ENCODE measurements at regions of chr14 and their contacts with region 1.

Region 1: GRCh38 chr14:35046048-35046741 is at the start of gene FAM177A1:
- DNase-seq: peak; percentile 97 to 99 (median 99)
- ATAC-seq: peak; percentile 96 to 98 (median 98)
- H3K4me3 ChIP-seq: peak within 1 kb of the TSS; percentile 62 to 95 (median 84)
- H3K27ac ChIP-seq: peak within 1 kb of the TSS; percentile 91 to 99 (median 96)
- H3K4me1 ChIP-seq: peaks cover 0 to 43% (median 27%) of the 10 kb centered on the region in 12 donors
- H3K27me3 ChIP-seq: no peaks in the 10 kb centered on the region
- CTCF ChIP-seq: no peak
- POLR2A ChIP-seq: peak; percentile 74 to 96
- total RNA-seq, gene FAM177A1: 56.3 to 129 (median 98.8) TPM

Region 2: DNA sequence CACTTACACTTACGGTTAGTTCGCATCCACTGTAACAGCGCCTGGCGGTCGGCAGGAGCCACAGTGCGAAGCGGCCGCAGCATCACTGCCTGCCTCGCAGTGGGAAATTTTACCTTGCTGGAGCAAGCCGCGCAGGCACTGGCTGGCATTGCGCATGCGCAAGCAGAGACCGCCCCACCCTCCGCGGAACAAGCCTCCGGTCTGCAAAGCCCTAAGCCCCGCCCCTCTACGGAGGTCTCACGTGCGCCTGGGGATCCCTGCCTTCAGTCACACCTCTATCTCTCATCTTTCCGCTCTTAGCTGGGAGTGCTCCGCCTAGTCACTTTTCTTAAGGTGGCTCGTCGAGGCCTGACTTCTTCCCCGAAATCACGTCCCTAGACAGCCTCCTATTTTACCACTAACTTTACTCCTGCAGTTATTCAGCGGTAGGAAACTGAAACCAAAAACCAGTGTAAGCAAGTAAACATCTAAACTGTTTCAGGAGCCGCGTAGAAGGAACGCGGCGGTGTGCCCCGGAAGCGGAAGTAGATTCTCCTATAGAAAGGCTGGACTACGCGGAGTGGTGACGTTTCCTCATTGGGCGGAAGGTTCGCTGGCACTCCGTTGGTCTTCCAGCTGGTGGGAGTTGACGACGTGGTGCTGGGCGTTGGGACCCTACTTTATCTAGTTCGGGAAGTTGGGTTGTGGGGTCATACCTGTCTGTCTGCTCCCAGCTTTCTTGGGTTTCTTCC is 63.6 kb before region 1 on chr14 and contains the start of gene SRP54:
- intact Hi-C with region 1: loop called in 4 of 10 experiments (anchors 5 to 10 kb)
- DNase-seq: peak; percentile 98 to 99 (median 99)
- ATAC-seq: peak; percentile 97 to 99 (median 97)
- H3K4me3 ChIP-seq: peak within 1 kb of the TSS; percentile 66 to 99 (median 86)
- H3K27ac ChIP-seq: peak within 1 kb of the TSS; percentile 90 to 100 (median 96)
- H3K4me1 ChIP-seq: peaks cover 7 to 44% (median 29%) of the 10 kb centered on the region in 12 donors
- H3K27me3 ChIP-seq: no peaks in the 10 kb centered on the region
- CTCF ChIP-seq: peak in 4 of 12 donors; percentile 3 to 21 (median 9)
- POLR2A ChIP-seq: peak in 1 of 2 donors; percentile 83
- total RNA-seq, gene SRP54: 29.0 to 37.3 (median 34.0) TPM

Region 3: DNA sequence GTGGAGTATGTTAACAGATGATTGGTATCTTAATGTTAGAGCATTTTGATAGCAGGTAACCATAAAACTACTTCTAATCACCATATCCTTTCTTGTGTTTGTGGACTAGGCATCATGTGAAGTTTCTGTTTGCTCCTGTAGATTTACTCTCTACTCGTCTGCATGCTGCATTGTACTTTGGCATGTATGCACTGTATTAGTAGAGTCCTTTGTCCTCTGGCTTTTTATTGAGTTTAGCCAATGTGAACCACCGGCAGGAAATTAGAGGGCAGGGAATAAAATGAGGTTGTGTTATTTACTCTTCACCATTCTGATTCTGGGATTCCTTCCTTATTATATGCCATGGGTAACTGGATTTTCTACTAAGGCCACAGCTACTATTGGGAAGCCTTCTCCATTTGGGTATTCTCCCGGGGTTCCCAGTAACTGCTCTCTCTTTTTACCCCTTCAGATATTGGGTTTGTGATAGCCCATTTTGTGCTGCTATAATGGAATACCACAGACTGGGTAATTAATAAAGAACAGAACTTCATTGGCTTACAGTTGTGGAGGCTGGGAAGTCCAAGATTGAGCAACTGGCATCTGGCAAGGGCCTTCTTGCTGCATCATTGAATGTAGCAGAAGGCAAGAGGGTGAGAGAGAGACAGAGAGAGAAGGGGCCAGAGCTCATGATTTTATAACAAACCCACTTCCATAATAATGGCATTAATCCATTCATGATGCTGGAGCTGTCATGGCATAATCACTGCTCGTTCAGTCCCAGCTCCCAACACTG is 22.2 kb after region 1 on chr14:
- intact Hi-C with region 1: no loop called
- DNase-seq: no peak
- ATAC-seq: no peak
- H3K4me3 ChIP-seq: no peak overlapping the region
- H3K27ac ChIP-seq: no peak overlapping the region
- H3K4me1 ChIP-seq: peaks cover 0 to 2% (median 0%) of the 10 kb centered on the region in 12 donors
- H3K27me3 ChIP-seq: no peaks in the 10 kb centered on the region
- CTCF ChIP-seq: no peak
- POLR2A ChIP-seq: no peak

Measured in heart left ventricle (tissue), 16 donors.